Naive thymus-derived CD4-positive, alpha-beta T cell (primary cell): ENCODE measurements at regions of chr3 and their contacts with region 1.

Region 1: DNA sequence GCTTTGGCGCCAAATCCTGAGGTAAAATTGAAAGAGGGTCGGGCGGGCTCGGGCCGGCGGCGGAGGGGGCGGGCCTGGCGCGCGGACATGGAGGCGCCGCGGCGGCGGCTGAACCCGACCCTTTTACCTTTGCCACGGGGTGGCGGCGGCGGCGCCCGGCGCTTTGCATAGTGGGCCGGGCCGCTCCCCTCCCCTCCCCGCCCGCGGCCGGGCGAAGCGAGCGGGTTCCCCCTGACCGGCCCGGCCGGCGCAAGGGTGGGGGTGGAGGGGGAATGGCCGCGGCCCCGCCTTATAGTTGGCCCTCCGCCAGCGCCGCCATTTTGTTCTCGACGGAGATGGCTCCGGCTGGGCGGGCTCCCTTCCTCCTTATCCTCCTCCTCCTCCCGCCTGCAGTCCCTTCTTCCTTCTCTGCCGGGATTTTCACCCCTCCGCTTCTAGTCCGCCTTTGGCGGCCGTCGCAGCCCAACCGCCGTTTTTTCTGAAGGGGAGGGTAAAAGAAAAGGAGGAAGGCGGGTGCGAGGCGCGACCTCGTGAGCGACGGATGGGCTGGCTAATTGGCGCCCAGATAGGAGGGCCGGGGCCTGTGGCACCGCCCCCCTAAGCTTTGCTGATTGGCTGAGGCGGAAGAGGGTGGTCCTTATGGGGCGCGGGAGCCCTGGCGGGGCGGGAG is 638 bp downstream of the NR2C2 start:
- DNase-seq: peak; percentile 93 to 98 (median 96)
- ATAC-seq: peak; percentile 94
- H3K4me3 ChIP-seq: peak overlapping the region; percentile 93
- H3K4me3 Mint-ChIP-seq: peak overlapping the region; percentile 97 to 100 (median 98)
- H3K27ac ChIP-seq: peak overlapping the region; percentile 99
- H3K27ac Mint-ChIP-seq: peak overlapping the region; percentile 98 to 100 (median 100)
- H3K4me1 ChIP-seq: peaks cover 19 to 22% of the 10 kb centered on the region in 2 donors
- H3K4me1 Mint-ChIP-seq: peaks cover 31 to 74% (median 60%) of the 10 kb centered on the region in 7 donors
- H3K27me3 ChIP-seq: no peaks in the 10 kb centered on the region
- H3K27me3 Mint-ChIP-seq: peaks cover 0 to 2% (median 0%) of the 10 kb centered on the region in 5 donors

Region 2: DNA sequence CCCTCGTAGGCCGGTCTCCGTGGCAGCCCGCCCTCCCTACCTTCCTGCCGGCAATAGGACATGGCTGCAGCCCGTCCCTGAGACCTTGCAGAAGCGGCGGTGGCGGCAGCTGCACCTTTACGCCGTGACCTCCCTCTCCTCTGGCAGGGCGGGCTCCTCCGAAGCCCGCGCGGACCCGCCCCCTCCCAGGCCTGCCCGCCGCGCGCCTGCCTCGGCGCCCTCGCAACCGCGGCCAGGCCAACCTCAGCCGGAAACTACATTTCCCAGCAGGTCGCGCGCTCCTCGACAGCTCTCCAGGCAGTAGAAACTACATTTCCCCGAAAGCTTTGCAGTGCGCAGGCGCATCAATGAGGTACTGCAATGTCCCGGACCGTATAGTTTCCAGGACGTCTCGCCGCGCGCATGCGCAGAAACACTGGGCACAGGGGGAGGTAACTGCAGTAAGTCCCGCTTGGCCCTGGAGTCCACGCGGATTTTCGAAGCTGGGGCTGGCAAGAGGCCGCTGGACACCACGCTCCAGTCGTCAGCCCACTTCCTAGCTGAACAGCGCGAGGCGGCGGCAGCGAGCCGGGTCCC is 823.3 kb before region 1 on chr3 and contains the starts of genes CHCHD4 and TMEM43:
- CTCF ChIA-PET with region 1: no interaction called
- POLR2A ChIA-PET with region 1: no interaction called
- intact Hi-C with region 1: loop called (anchors 1 kb)
- DNase-seq: peak; percentile 91 to 99 (median 98)
- ATAC-seq: peak; percentile 96
- H3K4me3 ChIP-seq: peak within 1 kb of the TSS; percentile 100
- H3K4me3 Mint-ChIP-seq: peak within 1 kb of the TSS; percentile 93 to 98 (median 96)
- H3K27ac ChIP-seq: peak within 1 kb of the TSS; percentile 89
- H3K27ac Mint-ChIP-seq: peak within 1 kb of the TSS; percentile 87 to 97 (median 94)
- H3K4me1 ChIP-seq: peaks cover 28 to 30% of the 10 kb centered on the region in 2 donors
- H3K4me1 Mint-ChIP-seq: peaks cover 43 to 70% (median 63%) of the 10 kb centered on the region in 7 donors
- H3K27me3 ChIP-seq: no peaks in the 10 kb centered on the region
- H3K27me3 Mint-ChIP-seq: no peaks in the 10 kb centered on the region
- total RNA-seq, gene CHCHD4: 3.3 to 14.1 (median 8.4) TPM
- total RNA-seq, gene TMEM43: 30.1 to 54.8 (median 46.5) TPM

Region 3: DNA sequence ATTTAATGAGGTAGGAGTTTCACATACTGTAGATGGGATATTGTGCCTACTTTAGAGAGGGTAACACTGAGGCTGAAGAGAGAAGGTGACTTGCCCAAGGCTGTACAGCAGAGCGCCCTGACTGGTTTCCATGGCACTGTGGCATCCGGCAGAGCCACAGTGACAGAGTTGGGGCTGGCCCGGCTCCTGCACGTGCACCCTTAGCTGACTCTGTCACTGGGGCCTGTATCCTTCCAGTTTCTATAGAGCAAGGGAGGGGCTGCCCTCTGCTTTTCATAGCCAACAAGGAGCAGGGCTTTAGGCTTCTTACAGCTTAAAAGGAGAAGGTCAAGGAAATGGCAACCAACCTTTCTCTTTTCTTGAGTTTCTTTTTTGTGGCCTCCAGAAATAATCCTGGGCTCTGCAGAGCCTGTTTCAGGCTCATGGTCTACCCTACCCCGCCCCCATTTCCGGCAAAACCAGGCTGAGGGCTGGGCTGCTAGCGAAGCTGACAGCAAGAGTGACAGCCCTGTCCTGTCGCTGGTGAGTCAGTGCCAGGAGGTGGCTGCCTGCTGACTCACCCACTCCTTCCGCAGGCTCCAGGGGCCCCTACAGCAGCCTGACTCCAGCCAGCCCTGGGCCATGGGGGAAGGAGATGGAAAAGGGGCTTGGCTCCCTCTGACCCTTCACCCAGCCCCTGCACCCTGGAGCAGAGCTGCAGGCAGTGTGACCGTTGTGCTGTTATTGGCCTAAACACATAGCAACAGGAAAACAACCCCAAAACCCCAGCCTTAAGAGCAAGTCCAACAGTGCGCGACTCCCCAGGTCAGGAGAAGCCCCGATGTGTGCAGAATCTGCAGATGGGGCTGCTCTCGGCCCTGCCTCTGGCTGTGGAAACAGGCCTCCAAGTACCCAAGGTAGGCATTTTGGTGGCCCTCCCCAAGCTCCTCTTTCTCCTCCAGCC is 515.9 kb before region 1 on chr3:
- CTCF ChIA-PET with region 1: no interaction called
- POLR2A ChIA-PET with region 1: no interaction called
- intact Hi-C with region 1: loop called (anchors 1 to 2 kb)
- DNase-seq: peak; percentile 73 to 94 (median 91)
- ATAC-seq: peak; percentile 89
- H3K4me3 ChIP-seq: peak overlapping the region; percentile 53
- H3K4me3 Mint-ChIP-seq: peak overlapping the region; percentile 51 to 90 (median 78)
- H3K27ac ChIP-seq: peak overlapping the region; percentile 84
- H3K27ac Mint-ChIP-seq: peak overlapping the region; percentile 87 to 100 (median 98)
- H3K4me1 ChIP-seq: peaks cover 55 to 81% of the 10 kb centered on the region in 2 donors
- H3K4me1 Mint-ChIP-seq: peaks cover 57 to 85% (median 75%) of the 10 kb centered on the region in 7 donors
- H3K27me3 ChIP-seq: no peaks in the 10 kb centered on the region
- H3K27me3 Mint-ChIP-seq: no peaks in the 10 kb centered on the region

Region 4: GRCh38 chr3:14857506-14857905 is 90.5 kb before region 1 on chr3:
- CTCF ChIA-PET with region 1: no interaction called
- POLR2A ChIA-PET with region 1: no interaction called
- intact Hi-C with region 1: no loop called
- DNase-seq: no peak
- ATAC-seq: no peak
- H3K4me3 ChIP-seq: no peak overlapping the region
- H3K4me3 Mint-ChIP-seq: no peak overlapping the region
- H3K27ac ChIP-seq: no peak overlapping the region
- H3K27ac Mint-ChIP-seq: no peak overlapping the region
- H3K4me1 ChIP-seq: no peaks in the 10 kb centered on the region
- H3K4me1 Mint-ChIP-seq: no peaks in the 10 kb centered on the region
- H3K27me3 ChIP-seq: no peaks in the 10 kb centered on the region
- H3K27me3 Mint-ChIP-seq: peaks cover 0 to 37% (median 6%) of the 10 kb centered on the region in 5 donors

Region 5: GRCh38 chr3:15064835-15065549 is 117.0 kb after region 1 on chr3 and contains the start of gene MRPS25:
- CTCF ChIA-PET with region 1: no interaction called
- POLR2A ChIA-PET with region 1: interaction called, 5 read pairs
- intact Hi-C with region 1: loop called (anchors 1 kb)
- DNase-seq: peak; percentile 80 to 90 (median 87)
- ATAC-seq: peak; percentile 99
- H3K4me3 ChIP-seq: peak within 1 kb of the TSS; percentile 86
- H3K4me3 Mint-ChIP-seq: peak within 1 kb of the TSS; percentile 94 to 98 (median 96)
- H3K27ac ChIP-seq: peak within 1 kb of the TSS; percentile 87
- H3K27ac Mint-ChIP-seq: peak within 1 kb of the TSS; percentile 87 to 99 (median 94)
- H3K4me1 ChIP-seq: peaks cover 7 to 14% of the 10 kb centered on the region in 2 donors
- H3K4me1 Mint-ChIP-seq: peaks cover 16 to 29% (median 22%) of the 10 kb centered on the region in 7 donors
- H3K27me3 ChIP-seq: no peaks in the 10 kb centered on the region
- H3K27me3 Mint-ChIP-seq: no peaks in the 10 kb centered on the region
- total RNA-seq, gene MRPS25: 57.6 to 104 (median 76.0) TPM

Region 6: GRCh38 chr3:15107075-15107947 is 159.3 kb after region 1 on chr3:
- CTCF ChIA-PET with region 1: no interaction called
- POLR2A ChIA-PET with region 1: no interaction called
- intact Hi-C with region 1: no loop called
- DNase-seq: no peak
- ATAC-seq: no peak
- H3K4me3 ChIP-seq: no peak overlapping the region
- H3K4me3 Mint-ChIP-seq: no peak overlapping the region
- H3K27ac ChIP-seq: no peak overlapping the region
- H3K27ac Mint-ChIP-seq: peak overlapping the region in 1 of 9 donors; percentile 6
- H3K4me1 ChIP-seq: peaks cover 3 to 5% of the 10 kb centered on the region in 2 donors
- H3K4me1 Mint-ChIP-seq: peaks cover 3 to 12% (median 6%) of the 10 kb centered on the region in 7 donors
- H3K27me3 ChIP-seq: no peaks in the 10 kb centered on the region
- H3K27me3 Mint-ChIP-seq: peaks cover 4 to 15% (median 5%) of the 10 kb centered on the region in 5 donors

Region 7: DNA sequence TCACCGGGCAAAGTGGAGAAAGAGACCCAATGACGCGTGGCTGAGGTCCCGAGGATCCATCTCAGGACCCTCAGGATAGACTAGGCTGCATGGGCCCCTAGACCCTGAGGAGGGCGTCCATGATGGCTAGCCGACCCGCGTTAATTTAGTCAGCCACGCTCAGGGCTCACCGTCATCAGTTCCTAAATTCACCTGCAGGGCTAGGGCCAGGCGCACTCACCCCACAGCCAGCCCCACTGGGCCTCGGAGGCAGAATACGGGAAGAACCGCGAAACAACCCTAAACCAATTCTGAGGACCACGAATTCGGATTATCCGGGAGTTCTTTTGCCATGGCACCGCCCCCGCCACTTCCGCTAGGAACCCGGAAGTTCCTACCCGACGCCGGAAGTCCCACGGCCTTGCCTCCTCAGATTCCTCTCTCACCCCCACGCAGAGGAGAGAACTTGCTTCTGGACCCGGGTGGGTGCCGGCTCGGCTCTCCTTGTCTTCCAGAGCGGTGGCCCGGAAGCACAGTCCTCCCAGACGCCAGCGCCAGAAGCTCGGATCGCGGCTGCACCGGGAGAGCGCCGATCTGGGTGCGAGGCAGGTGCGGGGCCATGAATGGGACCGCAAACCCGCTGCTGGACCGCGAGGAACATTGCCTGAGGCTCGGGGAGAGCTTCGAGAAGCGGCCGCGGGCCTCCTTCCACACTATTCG is 479.3 kb after region 1 on chr3 and contains the starts of genes EAF1 and METTL6:
- CTCF ChIA-PET with region 1: no interaction called
- POLR2A ChIA-PET with region 1: no interaction called
- intact Hi-C with region 1: loop called in 1 of 2 experiments (anchors 1 kb)
- DNase-seq: peak; percentile 71 to 85 (median 84)
- ATAC-seq: peak; percentile 89
- H3K4me3 ChIP-seq: peak within 1 kb of the TSS; percentile 81
- H3K4me3 Mint-ChIP-seq: peak within 1 kb of the TSS; percentile 91 to 100 (median 98)
- H3K27ac ChIP-seq: peak within 1 kb of the TSS; percentile 91
- H3K27ac Mint-ChIP-seq: peak within 1 kb of the TSS; percentile 86 to 99 (median 94)
- H3K4me1 ChIP-seq: peaks cover 18 to 23% of the 10 kb centered on the region in 2 donors
- H3K4me1 Mint-ChIP-seq: peaks cover 47 to 82% (median 62%) of the 10 kb centered on the region in 7 donors
- H3K27me3 ChIP-seq: no peaks in the 10 kb centered on the region
- H3K27me3 Mint-ChIP-seq: no peaks in the 10 kb centered on the region
- total RNA-seq, gene EAF1: 17.8 to 61.9 (median 27.8) TPM
- total RNA-seq, gene METTL6: 7.9 to 23.0 (median 18.3) TPM